Activated CD4-positive, alpha-beta memory T cell treated with anti-CD3 and anti-CD28 coated beads for 36 hours (primary cell): ENCODE measurements at regions of chr15 and their contacts with region 1.

Region 1: DNA sequence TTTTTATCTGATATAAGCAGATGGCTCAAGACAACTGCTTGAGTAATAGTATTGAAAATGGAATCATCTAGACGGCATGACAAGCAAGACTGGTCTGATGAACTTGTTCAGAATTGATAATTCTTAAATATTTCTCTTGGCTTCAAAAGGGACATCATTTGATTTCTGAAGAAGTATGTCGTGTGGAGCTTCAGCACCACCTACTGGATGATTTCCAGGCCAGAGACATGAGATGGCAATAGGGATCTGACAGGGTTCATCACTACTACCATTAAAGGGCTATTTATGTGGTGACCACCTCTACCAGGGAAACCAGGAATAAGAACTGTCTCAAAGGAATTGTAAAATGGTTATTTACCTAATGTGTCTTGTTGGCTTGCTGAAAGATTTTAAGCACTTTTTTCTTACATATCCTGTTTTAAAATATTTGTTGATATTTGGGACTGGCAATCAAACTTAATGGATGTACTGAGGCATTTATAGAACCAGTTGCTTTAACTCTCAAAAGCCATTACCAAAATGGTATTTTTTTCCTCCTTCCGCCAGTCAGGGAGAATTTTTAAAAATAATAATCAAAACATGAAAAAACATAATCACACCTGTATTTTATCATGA is 99.5 kb upstream of the FAM98B start:
- DNase-seq: peak; percentile 66
- H3K4me3 Mint-ChIP-seq: no peak overlapping the region
- H3K27ac Mint-ChIP-seq: no peak overlapping the region
- H3K4me1 Mint-ChIP-seq: no peaks in the 10 kb centered on the region
- H3K27me3 Mint-ChIP-seq: peaks cover 8% of the 10 kb centered on the region

Region 2: DNA sequence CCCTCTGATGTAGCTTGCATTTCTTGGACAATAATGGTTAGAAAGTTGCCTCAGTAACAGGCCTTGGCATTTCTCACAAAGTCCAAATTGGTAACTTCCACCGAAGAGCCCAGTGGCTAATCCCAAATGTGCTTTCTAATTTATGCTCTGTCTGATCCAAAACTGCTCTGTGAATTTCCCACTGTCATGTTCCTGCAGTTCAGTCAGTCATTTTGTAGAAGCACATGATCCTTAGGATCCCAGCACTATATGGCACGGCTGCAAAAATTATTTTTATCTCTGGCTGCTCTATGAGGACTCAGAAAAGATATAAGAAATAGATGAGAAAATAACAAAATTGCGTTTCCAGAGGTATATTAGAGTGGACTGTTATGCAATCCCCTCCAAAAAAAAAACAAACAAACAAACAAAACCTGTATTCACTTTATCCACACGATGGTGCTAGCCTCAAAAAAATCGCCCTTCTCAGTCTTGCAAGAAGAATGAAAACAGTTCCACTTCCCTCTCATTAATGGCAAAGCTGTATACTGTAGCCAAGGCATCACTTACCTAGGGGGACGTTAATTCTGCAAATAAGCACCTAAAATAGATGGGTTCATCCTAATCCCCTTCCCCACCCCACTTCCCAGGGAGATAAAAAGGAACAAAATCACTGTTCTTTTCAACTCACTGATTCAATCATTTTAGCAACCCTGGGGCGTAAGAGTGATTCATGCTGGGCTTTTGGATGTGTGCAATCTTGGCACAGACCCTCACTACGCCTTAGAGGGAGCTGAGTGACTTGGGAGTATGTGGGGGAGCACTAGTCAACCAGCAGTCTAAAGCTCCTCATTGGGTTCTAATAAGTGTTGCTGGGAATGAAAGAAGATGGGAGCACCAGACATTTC is 358.7 kb before region 1 on chr15:
- CTCF ChIA-PET with region 1: interaction called, 4 read pairs
- POLR2A ChIA-PET with region 1: no interaction called
- intact Hi-C with region 1: loop called (anchors 2 kb)
- DNase-seq: no peak
- H3K4me3 Mint-ChIP-seq: no peak overlapping the region
- H3K27ac Mint-ChIP-seq: no peak overlapping the region
- H3K4me1 Mint-ChIP-seq: no peaks in the 10 kb centered on the region
- H3K27me3 Mint-ChIP-seq: peaks cover 2% of the 10 kb centered on the region

Region 3: DNA sequence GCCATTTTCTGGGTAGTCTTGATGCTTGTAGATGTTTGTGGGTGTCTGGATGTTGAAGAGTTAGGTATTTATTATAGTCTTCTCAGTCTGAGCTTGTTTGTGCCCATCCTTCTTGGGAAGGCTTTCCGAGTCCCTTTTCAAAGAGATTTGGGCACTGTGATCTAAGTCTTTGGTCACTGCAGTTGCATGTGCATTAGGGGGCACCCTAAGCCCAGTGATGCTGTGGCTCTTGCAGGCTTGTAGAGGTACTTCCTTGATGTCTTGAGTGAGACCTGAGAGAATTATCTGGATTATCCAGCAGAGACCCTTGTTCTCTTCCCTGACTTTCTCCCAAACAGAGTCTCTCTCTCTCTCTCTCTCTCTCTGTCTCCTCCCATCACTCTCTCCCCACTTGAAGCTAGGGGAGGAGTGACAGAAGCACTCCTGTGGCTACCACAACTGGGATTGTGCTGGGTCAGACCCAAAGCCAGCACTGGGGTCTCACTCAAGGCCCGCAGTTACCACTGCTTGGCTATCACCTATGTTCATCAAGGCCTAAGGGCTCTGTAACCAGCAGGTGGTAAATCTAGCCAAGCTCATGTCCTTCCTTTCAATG is 351.4 kb before region 1 on chr15:
- CTCF ChIA-PET with region 1: no interaction called
- POLR2A ChIA-PET with region 1: no interaction called
- intact Hi-C with region 1: loop called (anchors 1 kb)
- DNase-seq: peak; percentile 30
- H3K4me3 Mint-ChIP-seq: no peak overlapping the region
- H3K27ac Mint-ChIP-seq: no peak overlapping the region
- H3K4me1 Mint-ChIP-seq: no peaks in the 10 kb centered on the region
- H3K27me3 Mint-ChIP-seq: no peaks in the 10 kb centered on the region